BJ (cell line): ENCODE measurements at regions of chr7 and their contacts with region 1.

Region 1: GRCh38 chr7:35801392-35802101 is 690 bp downstream of the SEPTIN7 start:
- DNase-seq: no peak
- H3K4me3 ChIP-seq: peak overlapping the region; percentile 85
- H3K27me3 ChIP-seq: no peaks in the 10 kb centered on the region
- CTCF ChIP-seq: peak; percentile 78

Region 2: DNA sequence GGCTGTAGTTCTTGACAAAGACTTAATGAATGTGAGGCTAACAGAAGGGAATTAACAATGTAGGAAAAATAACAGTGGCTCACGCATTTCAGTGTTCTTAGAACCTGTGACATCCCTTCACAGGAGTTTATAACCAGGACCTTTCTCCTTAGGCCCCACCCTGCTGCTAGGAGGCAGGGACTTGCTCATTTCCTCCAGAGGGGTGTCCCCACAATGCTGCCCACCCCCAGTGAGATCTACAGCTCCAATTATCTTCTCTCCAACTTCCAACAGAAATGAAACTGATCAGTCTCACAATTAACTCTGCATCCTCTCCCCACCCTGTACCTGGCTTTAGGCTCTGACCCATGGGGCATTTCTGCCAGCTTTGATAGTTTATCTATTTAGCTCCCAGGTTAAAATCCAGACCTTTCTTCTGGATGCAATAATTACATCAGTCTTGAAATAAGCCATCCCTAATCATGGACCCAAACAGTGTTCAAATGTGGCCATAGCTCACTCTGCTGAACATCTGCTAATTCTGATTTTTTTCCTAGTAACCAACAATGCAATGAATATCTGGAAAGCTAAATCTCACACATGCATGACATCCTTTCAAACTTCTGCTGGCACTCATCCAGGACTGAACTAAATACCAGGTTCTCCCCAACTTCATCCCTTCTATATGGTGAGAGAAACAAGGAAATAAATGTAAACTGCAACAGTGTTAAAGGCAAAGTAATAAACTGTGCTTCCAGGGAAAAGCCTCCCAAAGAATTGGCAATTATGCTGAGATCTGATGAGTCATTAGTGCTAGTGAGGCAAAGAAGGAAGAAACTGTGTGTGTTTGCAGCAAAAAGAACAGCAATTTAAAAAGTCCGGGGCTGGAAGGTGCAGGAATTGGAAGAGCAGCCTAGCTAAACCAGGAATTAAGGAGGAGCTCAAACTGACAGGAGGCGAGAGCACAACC is 171.2 kb before region 1 on chr7:
- CTCF ChIA-PET with region 1: no interaction called
- POLR2A ChIA-PET with region 1: no interaction called
- DNase-seq: no peak
- H3K4me3 ChIP-seq: no peak overlapping the region
- H3K27me3 ChIP-seq: no peaks in the 10 kb centered on the region
- CTCF ChIP-seq: no peak

Region 3: GRCh38 chr7:35681231-35682029 is 120.1 kb before region 1 on chr7:
- CTCF ChIA-PET with region 1: no interaction called
- POLR2A ChIA-PET with region 1: no interaction called
- DNase-seq: no peak
- H3K4me3 ChIP-seq: no peak overlapping the region
- H3K27me3 ChIP-seq: no peaks in the 10 kb centered on the region
- CTCF ChIP-seq: no peak

Region 4: GRCh38 chr7:35707422-35707821 is 94.1 kb before region 1 on chr7:
- CTCF ChIA-PET with region 1: interaction called, 51 read pairs
- POLR2A ChIA-PET with region 1: no interaction called
- DNase-seq: no peak
- H3K4me3 ChIP-seq: no peak overlapping the region
- H3K27me3 ChIP-seq: no peaks in the 10 kb centered on the region
- CTCF ChIP-seq: no peak

Region 5: GRCh38 chr7:35816514-35816913 is 15.0 kb after region 1 on chr7:
- CTCF ChIA-PET with region 1: interaction called, 20 read pairs
- POLR2A ChIA-PET with region 1: interaction called, 16 read pairs
- DNase-seq: no peak
- H3K4me3 ChIP-seq: no peak overlapping the region
- H3K27me3 ChIP-seq: no peaks in the 10 kb centered on the region
- CTCF ChIP-seq: no peak